Endothelial cell of umbilical vein (primary cell): ENCODE measurements at regions of chr12 and their contacts with region 1.

Region 1: DNA sequence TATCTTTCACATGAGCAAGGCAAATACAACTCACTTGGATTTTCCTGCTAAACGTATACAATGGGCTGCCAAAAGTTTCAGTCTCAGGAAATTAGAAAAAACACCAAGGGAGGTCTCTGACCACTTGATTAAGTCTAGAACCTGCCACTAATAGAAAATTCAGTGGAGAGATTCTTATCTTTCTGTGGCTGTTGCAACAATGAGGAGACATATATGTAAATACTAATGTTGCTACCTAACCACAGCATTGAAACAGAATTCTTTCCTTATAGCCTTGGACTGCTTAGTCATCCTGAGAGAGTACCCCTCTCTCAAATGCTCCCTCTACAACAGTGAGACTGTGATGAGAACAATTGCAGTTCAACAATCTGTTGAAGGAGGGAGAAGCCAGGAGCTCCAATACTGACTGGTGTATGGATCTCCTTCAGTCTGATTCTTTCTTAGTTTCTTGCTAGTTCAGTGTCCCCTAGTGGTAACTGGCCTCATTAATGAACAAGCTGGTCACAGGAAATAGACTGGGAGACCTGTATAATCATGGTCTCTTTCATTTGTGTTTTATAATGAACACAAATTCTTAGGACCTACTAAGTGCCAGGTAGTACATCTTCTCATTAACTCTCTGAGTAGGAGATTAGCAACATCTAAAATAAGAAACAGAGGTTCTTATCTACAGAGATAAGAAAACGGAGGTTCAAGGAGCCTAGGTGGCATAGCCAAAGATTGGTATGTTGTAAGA is 164.5 kb downstream of the SLC38A4 start:
- DNase-seq: peak; percentile 94
- H3K4me3 ChIP-seq: no peak overlapping the region
- H3K27ac ChIP-seq: peak overlapping the region; percentile 83
- H3K4me1 ChIP-seq: peaks cover 59% of the 10 kb centered on the region
- H3K27me3 ChIP-seq: no peaks in the 10 kb centered on the region
- CTCF ChIP-seq: peak; percentile 57 to 69
- POLR2A ChIP-seq: peak; percentile 32

Region 2: GRCh38 chr12:46153268-46153872 is 507.9 kb before region 1 on chr12:
- CTCF ChIA-PET with region 1: no interaction called
- POLR2A ChIA-PET with region 1: no interaction called
- dilution Hi-C with region 1: no loop called
- intact Hi-C with region 1: loop called (anchors 5 kb)
- DNase-seq: peak; percentile 37
- H3K4me3 ChIP-seq: no peak overlapping the region
- H3K27ac ChIP-seq: peak overlapping the region; percentile 28
- H3K4me1 ChIP-seq: peaks cover 23% of the 10 kb centered on the region
- H3K27me3 ChIP-seq: no peaks in the 10 kb centered on the region
- CTCF ChIP-seq: peak; percentile 38 to 40
- POLR2A ChIP-seq: no peak

Region 3: DNA sequence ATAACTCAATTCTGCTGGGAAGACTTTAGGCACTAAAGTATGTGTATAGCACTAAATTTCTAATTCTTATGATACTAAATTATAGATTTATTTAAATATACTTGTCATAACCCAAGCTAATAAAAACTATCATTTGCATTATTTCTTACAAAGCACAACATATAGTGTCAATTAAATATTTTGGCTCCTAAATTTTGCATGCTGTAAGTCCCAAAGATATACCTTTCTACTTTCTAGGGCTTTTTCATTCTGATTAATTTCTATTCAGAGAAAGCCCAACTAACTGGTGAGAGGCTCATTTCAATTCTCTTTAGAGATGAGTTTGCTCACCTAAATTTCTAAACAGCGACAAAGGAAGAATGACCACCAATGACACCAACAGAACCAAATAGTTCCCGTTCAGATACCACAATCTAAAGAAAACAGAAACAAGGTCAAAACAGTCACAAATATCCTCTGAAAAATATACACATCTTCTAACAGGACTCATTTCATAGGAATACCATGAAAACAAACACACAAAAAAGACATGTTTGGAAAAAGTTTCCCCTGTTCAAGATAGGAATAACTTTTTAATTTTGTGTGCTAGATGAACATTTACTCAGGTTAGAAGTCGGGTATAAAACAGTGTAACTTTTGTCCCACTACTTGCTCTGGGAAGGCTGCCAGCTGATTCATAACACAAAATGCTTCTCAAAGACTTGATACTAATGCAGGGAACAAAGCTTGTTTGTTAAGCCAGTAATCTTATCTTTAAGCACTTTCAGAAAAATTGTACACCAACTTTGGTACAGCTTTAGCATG is 296.3 kb before region 1 on chr12:
- CTCF ChIA-PET with region 1: interaction called, 21 read pairs
- POLR2A ChIA-PET with region 1: interaction called, 13 read pairs
- dilution Hi-C with region 1: no loop called
- intact Hi-C with region 1: no loop called
- DNase-seq: peak; percentile 72
- H3K4me3 ChIP-seq: peak overlapping the region in 1 of 3 experiments; percentile 43
- H3K27ac ChIP-seq: no peak overlapping the region
- H3K4me1 ChIP-seq: peaks cover 62% of the 10 kb centered on the region
- H3K27me3 ChIP-seq: no peaks in the 10 kb centered on the region
- CTCF ChIP-seq: no peak
- POLR2A ChIP-seq: peak; percentile 30

Region 4: DNA sequence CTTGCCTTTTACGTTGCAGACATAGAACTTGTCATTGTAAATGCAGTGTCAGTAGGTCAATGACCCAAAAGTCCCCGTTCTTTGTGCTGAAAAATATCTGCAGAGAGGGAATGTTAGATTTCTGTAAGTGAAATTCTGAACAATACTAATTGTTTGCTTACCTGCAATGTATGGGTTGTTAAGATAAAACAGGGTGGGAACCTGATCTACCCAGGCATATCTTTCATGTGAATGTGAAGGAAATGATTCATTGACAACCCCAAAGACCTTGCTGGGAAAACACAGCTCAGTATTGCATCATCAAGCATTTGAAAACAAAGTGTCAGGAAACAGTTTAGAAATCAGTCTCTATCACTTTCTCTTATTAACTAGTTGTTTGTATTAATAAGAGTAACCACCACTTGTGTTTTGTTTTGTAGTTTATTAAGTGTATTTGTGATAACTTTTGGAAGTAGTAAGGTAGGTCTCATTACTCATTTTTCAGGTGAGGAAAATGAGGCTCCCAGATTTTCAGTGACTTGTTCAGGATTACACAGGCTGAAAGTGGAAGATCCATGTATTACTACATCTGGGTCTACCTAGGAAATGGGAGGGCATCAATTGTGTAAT is 230.8 kb before region 1 on chr12:
- CTCF ChIA-PET with region 1: interaction called, 29 read pairs
- POLR2A ChIA-PET with region 1: interaction called, 5 read pairs
- dilution Hi-C with region 1: no loop called
- intact Hi-C with region 1: loop called (anchors 1 kb)
- DNase-seq: peak; percentile 97
- H3K4me3 ChIP-seq: peak overlapping the region in 1 of 3 experiments; percentile 48
- H3K27ac ChIP-seq: peak overlapping the region; percentile 99
- H3K4me1 ChIP-seq: peaks cover 43% of the 10 kb centered on the region
- H3K27me3 ChIP-seq: no peaks in the 10 kb centered on the region
- CTCF ChIP-seq: no peak
- POLR2A ChIP-seq: peak; percentile 72

Region 5: GRCh38 chr12:46483572-46484395 is 177.5 kb before region 1 on chr12:
- CTCF ChIA-PET with region 1: interaction called, 12 read pairs
- POLR2A ChIA-PET with region 1: no interaction called
- dilution Hi-C with region 1: no loop called
- intact Hi-C with region 1: no loop called
- DNase-seq: peak; percentile 75
- H3K4me3 ChIP-seq: no peak overlapping the region
- H3K27ac ChIP-seq: peak overlapping the region; percentile 39
- H3K4me1 ChIP-seq: peaks cover 23% of the 10 kb centered on the region
- H3K27me3 ChIP-seq: no peaks in the 10 kb centered on the region
- CTCF ChIP-seq: no peak
- POLR2A ChIP-seq: no peak

Region 6: DNA sequence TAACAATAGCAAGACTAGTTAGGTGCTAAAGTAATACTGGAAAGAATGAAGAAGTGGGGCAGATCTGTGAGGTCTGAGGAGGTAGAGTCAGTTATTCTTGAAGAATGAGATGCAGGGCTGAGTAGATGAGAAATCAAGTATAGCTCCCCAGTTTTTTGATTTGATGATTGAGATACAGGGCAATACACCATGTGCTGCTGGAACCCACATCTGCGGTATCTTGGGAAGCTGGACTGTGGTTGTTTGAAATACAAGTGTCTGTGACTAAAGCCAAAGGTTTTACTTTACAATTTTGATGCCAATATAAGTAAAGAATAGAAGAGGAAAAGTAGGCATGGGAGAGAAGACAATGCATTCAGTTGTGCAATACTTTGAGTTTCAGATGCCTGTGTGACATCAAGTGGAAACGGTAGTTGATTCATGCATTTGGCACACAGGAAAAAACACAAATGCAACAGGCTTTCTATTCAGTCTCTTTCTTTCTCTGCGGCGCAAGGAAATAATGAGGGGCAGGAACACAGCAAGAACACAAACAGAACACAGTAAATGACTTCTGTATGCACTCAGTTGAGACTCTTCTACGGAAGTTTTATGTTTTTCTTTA is 98.6 kb before region 1 on chr12:
- CTCF ChIA-PET with region 1: interaction called, 11 read pairs
- POLR2A ChIA-PET with region 1: no interaction called
- dilution Hi-C with region 1: no loop called
- intact Hi-C with region 1: loop called (anchors 1 kb)
- DNase-seq: peak; percentile 94
- H3K4me3 ChIP-seq: peak overlapping the region in 1 of 3 experiments; percentile 28
- H3K27ac ChIP-seq: peak overlapping the region; percentile 96
- H3K4me1 ChIP-seq: peaks cover 24% of the 10 kb centered on the region
- H3K27me3 ChIP-seq: no peaks in the 10 kb centered on the region
- CTCF ChIP-seq: no peak
- POLR2A ChIP-seq: peak; percentile 39

Region 7: GRCh38 chr12:46693034-46693433 is 31.8 kb after region 1 on chr12:
- CTCF ChIA-PET with region 1: no interaction called
- POLR2A ChIA-PET with region 1: no interaction called
- dilution Hi-C with region 1: no loop called
- intact Hi-C with region 1: no loop called
- DNase-seq: no peak
- H3K4me3 ChIP-seq: no peak overlapping the region
- H3K27ac ChIP-seq: no peak overlapping the region
- H3K4me1 ChIP-seq: no peaks in the 10 kb centered on the region
- H3K27me3 ChIP-seq: no peaks in the 10 kb centered on the region
- CTCF ChIP-seq: no peak
- POLR2A ChIP-seq: no peak

Region 8: DNA sequence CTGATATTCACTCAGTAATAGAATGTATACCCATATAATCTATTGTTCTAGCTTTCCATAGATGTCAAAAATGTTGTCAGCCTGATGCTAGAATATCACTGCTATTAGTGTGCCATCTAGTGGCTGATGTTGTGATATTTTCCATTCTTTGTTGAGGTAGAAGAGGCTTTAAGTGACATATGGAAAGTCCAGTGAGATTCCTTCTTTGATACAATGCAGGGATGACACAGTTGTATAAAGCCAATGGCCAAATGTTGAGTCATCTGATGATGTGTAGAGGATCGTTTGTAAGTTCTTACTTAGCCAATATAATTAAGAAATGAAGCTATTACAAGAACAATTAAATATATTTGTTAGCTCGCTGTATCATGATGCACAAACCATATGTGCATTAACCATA is 360.0 kb after region 1 on chr12:
- CTCF ChIA-PET with region 1: interaction called, 14 read pairs
- POLR2A ChIA-PET with region 1: no interaction called
- dilution Hi-C with region 1: no loop called
- intact Hi-C with region 1: no loop called
- DNase-seq: peak; percentile 91
- H3K4me3 ChIP-seq: no peak overlapping the region
- H3K27ac ChIP-seq: no peak overlapping the region
- H3K4me1 ChIP-seq: peaks cover 20% of the 10 kb centered on the region
- H3K27me3 ChIP-seq: no peaks in the 10 kb centered on the region
- CTCF ChIP-seq: peak; percentile 32 to 38
- POLR2A ChIP-seq: no peak